K562 (cell line): ENCODE measurements at regions of chr12 and their contacts with region 1.

Region 1: DNA sequence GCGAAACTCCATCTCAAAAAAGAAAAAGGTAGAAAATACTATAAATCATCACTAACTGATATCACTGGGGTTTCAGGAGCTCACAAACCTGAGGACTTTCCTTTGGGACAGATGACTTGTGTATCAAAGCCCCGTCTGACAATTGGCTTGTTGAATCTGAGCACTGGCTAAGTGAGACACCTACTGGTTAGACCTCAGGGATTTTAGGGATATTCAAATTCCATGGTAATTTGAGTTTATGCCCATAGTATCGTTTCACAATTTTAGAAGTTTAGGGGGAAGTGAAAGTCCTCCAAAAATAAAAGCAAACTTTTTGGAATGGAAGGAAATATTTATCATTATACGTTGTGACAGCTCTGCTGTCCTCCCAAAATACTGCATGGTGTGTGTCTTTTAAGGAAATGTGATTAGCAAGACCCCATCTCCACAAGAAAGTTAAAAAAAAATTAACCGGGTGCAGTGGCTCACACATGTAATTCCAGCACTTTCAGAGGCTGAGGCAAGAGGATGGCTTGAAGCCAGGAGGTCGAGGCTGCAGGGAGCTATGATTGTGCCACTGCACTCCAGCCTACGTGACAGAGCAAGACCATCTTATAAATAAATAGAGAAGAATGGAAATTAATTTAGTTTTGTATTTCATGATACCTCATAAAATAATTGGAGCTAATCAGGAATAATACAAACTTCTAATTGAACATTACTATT is 49.2 kb downstream of the FBXL14 start:
- DNase-seq: no peak
- ATAC-seq: no peak
- H3K4me3 ChIP-seq: no peak overlapping the region
- H3K27ac ChIP-seq: no peak overlapping the region
- H3K4me1 ChIP-seq: peaks cover 4% of the 10 kb centered on the region in 2 experiments; a peak in 3 of 5 replicates
- H3K27me3 ChIP-seq: no peaks in the 10 kb centered on the region
- CTCF ChIP-seq: no peak
- EP300 ChIP-seq: no peak
- POLR2A ChIP-seq: no peak
- RAD21 ChIP-seq: no peak

Region 2: GRCh38 chr12:1559676-1560091 is 14.5 kb after region 1 on chr12:
- CTCF ChIA-PET with region 1: no interaction called
- POLR2A ChIA-PET with region 1: interaction called, 3 read pairs
- in situ Hi-C with region 1: no loop called
- intact Hi-C with region 1: loop called (anchors 1 kb)
- DNase-seq: no peak
- ATAC-seq: no peak
- H3K4me3 ChIP-seq: no peak overlapping the region
- H3K27ac ChIP-seq: no peak overlapping the region
- H3K4me1 ChIP-seq: peaks cover 0 to 4% of the 10 kb centered on the region in 2 experiments; a peak in 1 of 5 replicates
- H3K27me3 ChIP-seq: no peaks in the 10 kb centered on the region
- CTCF ChIP-seq: no peak
- EP300 ChIP-seq: no peak
- POLR2A ChIP-seq: no peak
- RAD21 ChIP-seq: no peak